ENCODE measurements at regions of chr16 and their contacts with region 1.

Region 1: DNA sequence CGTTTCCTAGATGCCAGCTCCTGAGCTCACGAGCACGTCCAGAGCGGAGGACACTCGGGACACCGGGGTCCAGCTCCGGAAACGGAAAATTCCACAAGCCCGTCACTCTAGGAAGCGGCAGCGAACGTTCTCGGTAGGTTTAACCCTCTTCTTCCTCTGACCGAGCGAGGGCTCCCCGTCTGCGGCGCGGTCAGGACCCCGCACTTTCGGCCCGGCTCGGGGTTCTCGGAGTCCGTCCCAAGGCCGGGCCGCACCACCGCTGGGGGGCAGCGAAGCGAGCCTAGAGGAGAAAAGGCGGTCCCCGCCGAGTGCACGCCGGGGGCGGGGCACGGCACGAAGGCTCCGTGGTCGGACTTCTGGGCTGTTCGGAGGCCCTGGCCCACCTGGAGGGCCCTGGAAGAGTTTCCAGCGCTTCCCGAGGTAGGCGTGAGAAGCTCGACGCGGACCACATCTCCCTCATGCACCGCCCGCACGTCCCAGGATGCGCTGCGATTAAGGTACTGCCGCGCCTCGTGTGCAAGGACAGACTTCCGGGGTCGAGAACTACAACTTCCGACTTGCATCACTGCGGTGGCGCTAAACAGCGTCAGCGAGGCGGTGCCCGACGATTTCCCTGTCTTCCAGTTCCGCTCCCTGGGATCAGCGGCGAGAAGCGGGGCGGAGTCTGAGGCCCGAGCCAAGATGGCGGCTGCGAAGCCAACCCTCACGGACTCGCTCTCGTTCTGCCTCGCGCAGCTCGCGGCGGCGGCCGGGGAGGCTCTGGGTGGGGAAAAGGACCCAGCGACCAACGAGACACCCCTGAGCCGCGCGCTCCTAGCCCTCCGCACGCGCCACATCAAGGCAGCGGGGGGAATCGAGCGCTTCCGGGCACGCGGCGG is at the start of gene ARMC5:
- DNase-seq: peak; percentile 98
- H3K4me3 Mint-ChIP-seq: peak within 1 kb of the TSS; percentile 87
- H3K27ac Mint-ChIP-seq: peak within 1 kb of the TSS; percentile 94
- H3K4me1 Mint-ChIP-seq: peaks cover 48% of the 10 kb centered on the region
- H3K27me3 Mint-ChIP-seq: no peaks in the 10 kb centered on the region
- total RNA-seq, gene ARMC5: 5.5 to 6.4 TPM

Region 2: DNA sequence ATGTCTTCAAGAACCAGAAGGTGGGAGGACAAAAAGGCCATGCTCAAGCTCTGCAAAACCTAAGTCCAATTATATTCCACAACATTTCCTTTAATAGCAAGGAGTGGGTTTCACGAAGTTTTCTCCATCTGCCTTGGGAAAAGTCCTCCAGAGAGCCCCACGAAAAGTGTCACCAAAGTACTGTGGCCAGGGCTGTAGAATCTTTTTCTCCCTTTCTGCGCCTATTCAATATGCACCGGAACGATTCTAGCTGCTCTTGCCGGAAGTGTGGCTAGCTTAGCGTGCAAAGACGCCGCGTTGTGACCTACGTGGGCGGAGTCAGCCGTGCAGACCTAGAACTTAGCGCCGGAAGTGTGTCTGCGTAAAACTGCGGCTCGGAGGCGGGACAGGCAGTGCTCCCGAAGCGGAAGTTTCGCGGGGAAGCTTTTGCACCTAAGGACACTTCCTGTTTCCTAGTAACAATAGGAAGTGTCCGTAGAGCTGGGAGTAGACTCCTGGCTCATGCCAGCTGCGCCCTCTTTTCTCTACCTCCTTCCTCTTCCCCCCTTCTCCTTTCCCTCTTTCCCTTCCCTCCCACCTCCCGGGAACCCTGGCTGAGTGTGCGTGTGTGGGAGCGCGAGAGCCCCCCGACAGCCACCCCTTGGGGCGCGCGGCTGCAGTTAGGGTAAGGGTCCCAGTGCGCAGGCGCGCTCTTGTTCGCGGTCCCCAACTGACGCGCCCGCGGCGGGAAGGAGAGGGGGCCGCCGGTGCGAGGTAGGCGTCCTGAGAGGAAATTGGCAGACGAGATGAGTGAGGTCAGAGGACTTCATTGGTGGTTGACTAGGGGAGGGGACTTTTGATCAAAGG is 384.9 kb before region 1 on chr16 and contains the starts of genes ZNF646 and ZNF668:
- CTCF ChIA-PET with region 1: no interaction called
- POLR2A ChIA-PET with region 1: interaction called, 3 read pairs
- intact Hi-C with region 1: loop called (anchors 1 kb)
- DNase-seq: peak; percentile 99
- H3K4me3 Mint-ChIP-seq: peak within 1 kb of the TSS; percentile 98
- H3K27ac Mint-ChIP-seq: peak within 1 kb of the TSS; percentile 97
- H3K4me1 Mint-ChIP-seq: peaks cover 30% of the 10 kb centered on the region
- H3K27me3 Mint-ChIP-seq: no peaks in the 10 kb centered on the region
- total RNA-seq, gene ZNF646: 18.6 to 19.9 TPM
- total RNA-seq, gene ZNF668: 11.4 to 13.3 TPM

Region 3: GRCh38 chr16:31376705-31377104 is 82.4 kb before region 1 on chr16:
- CTCF ChIA-PET with region 1: no interaction called
- POLR2A ChIA-PET with region 1: no interaction called
- intact Hi-C with region 1: no loop called
- DNase-seq: no peak
- H3K4me3 Mint-ChIP-seq: no peak overlapping the region
- H3K27ac Mint-ChIP-seq: no peak overlapping the region
- H3K4me1 Mint-ChIP-seq: no peaks in the 10 kb centered on the region
- H3K27me3 Mint-ChIP-seq: no peaks in the 10 kb centered on the region

Region 4: DNA sequence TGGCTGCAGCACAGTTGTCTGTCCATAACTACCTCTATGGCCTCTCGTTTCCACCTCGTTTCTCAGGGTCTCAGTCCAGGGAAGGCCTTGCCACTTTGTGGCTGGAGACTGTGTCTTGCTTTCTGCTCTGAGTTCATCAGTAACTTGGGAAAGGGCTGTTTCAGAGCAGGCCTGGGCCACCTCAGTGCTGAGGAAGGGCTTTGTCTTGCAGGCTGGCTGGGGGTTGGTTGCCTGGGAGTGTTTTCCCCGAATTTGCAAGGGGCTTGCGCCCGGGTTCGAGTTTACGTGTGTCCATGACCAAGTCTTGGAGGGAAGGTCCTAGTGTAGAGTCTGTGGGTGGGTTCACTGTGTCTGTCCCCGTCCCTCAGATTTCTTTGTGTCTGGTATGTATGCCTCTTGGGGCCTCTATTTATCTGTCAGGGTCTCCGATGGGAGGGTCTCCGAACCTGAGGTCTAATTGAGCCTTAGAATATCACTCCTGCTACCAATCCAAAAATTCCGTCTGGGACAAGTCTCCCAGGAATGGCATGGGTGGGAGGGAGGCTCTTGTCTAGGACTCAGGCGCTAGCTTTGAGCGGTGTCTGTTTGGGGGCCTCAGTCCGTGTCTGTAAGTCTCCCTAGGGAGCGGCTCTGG is 12.3 kb after region 1 on chr16:
- CTCF ChIA-PET with region 1: interaction called, 24 read pairs
- POLR2A ChIA-PET with region 1: interaction called, 7 read pairs
- intact Hi-C with region 1: no loop called
- DNase-seq: no peak
- H3K4me3 Mint-ChIP-seq: no peak overlapping the region
- H3K27ac Mint-ChIP-seq: no peak overlapping the region
- H3K4me1 Mint-ChIP-seq: peaks cover 11% of the 10 kb centered on the region
- H3K27me3 Mint-ChIP-seq: peaks cover 19% of the 10 kb centered on the region

Region 5: DNA sequence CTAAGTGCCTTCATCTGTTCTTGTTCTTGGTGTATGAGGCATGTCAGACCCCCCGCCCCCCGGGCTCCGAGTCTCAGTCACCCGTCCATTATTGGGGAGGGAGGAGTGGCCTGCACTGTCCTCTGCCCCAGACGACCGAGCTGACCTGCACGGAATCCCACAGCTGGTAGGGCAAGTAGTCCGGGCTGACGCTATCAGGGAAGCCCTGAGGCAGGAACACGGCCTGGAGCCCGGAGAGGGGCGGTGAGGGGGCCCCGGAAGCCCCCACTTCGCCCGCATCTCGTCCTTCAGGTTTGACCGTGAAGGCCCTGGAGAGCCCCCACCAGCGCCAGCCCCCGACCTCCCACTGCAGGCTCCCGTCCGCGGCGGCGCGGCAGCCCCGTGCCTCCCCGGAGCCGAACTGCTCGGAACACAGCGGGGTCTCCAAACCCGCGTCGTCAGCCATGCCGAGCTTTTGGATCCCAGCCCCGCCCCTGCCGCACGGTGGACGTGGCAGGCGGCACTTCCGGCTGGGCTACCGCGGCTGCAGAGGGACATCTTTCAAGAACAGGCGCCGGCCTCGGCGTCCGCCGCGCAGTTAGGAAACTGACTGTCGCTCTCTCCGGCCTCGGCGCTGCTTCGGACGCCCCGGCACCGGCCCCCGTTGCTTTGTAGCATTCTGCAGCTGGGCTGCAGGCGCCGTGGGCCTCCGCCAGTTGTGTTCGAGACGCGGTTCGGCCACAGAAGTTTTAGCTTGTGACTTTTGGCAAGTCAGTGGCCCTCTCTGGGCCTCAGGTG is 49.0 kb after region 1 on chr16 and contains the start of gene RUSF1:
- CTCF ChIA-PET with region 1: interaction called, 19 read pairs
- POLR2A ChIA-PET with region 1: interaction called, 5 read pairs
- intact Hi-C with region 1: loop called (anchors 1 kb)
- DNase-seq: peak; percentile 92
- H3K4me3 Mint-ChIP-seq: peak within 1 kb of the TSS; percentile 93
- H3K27ac Mint-ChIP-seq: peak within 1 kb of the TSS; percentile 94
- H3K4me1 Mint-ChIP-seq: peaks cover 44% of the 10 kb centered on the region
- H3K27me3 Mint-ChIP-seq: no peaks in the 10 kb centered on the region
- total RNA-seq, gene RUSF1: 40.9 to 41.2 TPM

Region 6: GRCh38 chr16:31713071-31713944 is 254.2 kb after region 1 on chr16:
- CTCF ChIA-PET with region 1: interaction called, 13 read pairs
- POLR2A ChIA-PET with region 1: interaction called, 4 read pairs
- intact Hi-C with region 1: loop called (anchors 5 kb)
- DNase-seq: peak; percentile 95
- H3K4me3 Mint-ChIP-seq: peak overlapping the region; percentile 99
- H3K27ac Mint-ChIP-seq: peak overlapping the region; percentile 98
- H3K4me1 Mint-ChIP-seq: peaks cover 43% of the 10 kb centered on the region
- H3K27me3 Mint-ChIP-seq: no peaks in the 10 kb centered on the region

Region 7: DNA sequence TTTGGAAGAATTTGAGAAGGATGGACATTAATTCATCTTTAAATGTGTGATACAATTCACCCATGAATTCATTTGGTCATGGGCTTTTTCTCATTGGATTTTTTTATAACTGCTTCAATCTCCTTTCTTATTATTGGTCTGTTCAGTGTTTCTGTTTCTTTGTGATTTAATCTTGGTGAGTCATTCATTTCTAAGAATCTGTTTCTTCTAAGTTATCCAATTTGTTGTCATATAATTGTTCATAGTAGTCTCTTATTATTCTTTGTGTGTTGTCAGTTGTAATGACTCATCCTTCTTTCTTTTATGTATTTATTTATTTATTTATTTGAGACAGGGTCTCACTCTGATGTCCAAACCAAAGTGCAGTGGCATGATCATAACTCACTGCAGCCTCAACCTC is 268.5 kb after region 1 on chr16:
- CTCF ChIA-PET with region 1: no interaction called
- POLR2A ChIA-PET with region 1: no interaction called
- intact Hi-C with region 1: no loop called
- DNase-seq: no peak
- H3K4me3 Mint-ChIP-seq: no peak overlapping the region
- H3K27ac Mint-ChIP-seq: no peak overlapping the region
- H3K4me1 Mint-ChIP-seq: peaks cover 8% of the 10 kb centered on the region
- H3K27me3 Mint-ChIP-seq: no peaks in the 10 kb centered on the region

Measured in activated CD4-positive, alpha-beta memory T cell treated with anti-CD3 and anti-CD28 coated beads for 36 hours (primary cell).